A549 (cell line): ENCODE measurements at regions of chr11 and their contacts with region 1.

Region 1: DNA sequence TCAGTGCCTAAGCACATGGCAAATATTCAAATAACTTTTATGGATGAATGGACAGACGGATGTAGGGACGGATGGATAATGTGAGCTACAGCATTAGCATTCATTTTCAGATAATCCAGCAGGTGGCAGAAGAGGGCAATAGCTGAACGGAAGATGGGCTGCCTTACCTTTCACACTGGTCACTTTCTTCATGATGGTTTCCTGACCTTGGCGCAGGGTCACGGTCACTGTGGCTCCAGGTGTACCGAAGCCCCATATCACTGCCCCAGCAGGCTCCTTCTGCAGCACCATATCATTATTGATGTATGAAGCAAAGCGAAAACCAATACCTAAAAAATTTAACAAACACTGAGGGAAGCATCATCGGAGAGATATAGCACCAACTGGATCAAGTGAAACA is 4.3 kb downstream of the SIAE start:
- DNase-seq: peak; percentile 48 to 49
- ATAC-seq: peak; percentile 57 to 65; a peak in 4 of 6 replicates
- H3K4me3 ChIP-seq: no peak overlapping the region
- H3K27ac ChIP-seq: no peak overlapping the region
- H3K4me1 ChIP-seq: no peaks in the 10 kb centered on the region
- CTCF ChIP-seq: peak; percentile 67
- EP300 ChIP-seq: no peak
- POLR2A ChIP-seq: no peak
- RAD21 ChIP-seq: peak; percentile 76 to 81

Region 2: DNA sequence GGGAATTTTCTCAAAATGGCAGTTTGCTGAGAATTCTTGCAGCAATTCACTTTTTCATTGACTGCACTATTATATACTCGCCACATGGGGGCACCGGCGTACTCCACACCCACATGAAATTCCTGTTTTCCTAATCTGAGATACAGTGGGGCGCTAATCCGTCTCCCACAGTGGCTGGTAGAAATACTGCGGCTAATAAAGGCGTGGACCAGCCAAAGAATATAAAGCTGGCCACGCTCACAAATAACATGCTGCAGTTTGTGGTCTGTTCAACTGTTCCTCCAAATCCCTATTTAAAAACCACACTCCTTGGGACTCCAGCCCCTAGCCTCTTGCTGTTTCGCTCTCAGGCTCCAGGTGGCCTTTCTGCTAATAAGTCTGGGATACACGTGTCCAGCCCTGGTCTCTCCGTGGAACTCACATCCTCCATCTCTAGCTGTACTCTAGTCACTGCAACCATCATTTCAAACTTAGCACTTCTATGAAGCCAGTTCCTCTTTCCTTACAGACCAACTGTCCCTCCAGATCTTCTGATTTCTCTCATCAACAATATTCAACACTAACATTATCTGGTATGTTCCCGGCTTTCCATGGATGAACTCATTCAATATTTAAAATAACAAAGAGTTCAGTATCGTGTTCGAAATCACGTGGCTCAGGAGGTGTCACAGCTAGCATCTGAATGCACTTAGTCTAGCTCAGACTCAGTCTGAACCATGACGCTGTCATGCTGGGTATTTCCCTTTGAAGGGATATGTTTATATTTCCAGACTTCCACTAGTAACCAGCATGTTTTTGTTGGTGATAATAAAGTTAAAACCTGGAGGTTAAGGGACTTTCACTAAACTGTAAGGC is 24.5 kb before region 1 on chr11:
- CTCF ChIA-PET with region 1: interaction called, 11 read pairs
- POLR2A ChIA-PET with region 1: no interaction called
- DNase-seq: peak; percentile 51 to 68
- ATAC-seq: peak; percentile 95
- H3K4me3 ChIP-seq: no peak overlapping the region
- H3K27ac ChIP-seq: peak overlapping the region; percentile 31 to 42; a peak in 1 of 6 replicates
- H3K4me1 ChIP-seq: no peaks in the 10 kb centered on the region
- CTCF ChIP-seq: peak; percentile 78
- EP300 ChIP-seq: no peak
- POLR2A ChIP-seq: no peak
- RAD21 ChIP-seq: peak; percentile 60 to 77

Region 3: GRCh38 chr11:124746621-124747243 is 77.5 kb after region 1 on chr11:
- CTCF ChIA-PET with region 1: interaction called, 11 read pairs
- POLR2A ChIA-PET with region 1: no interaction called
- DNase-seq: peak; percentile 84 to 85
- ATAC-seq: peak; percentile 89 to 92
- H3K4me3 ChIP-seq: peak overlapping the region; percentile 66
- H3K27ac ChIP-seq: peak overlapping the region; percentile 79 to 93
- H3K4me1 ChIP-seq: peaks cover 6% of the 10 kb centered on the region; the same call in 2 of the 3 replicates
- CTCF ChIP-seq: peak; percentile 57
- EP300 ChIP-seq: no peak
- POLR2A ChIP-seq: no peak
- RAD21 ChIP-seq: peak in 1 of 2 experiments; percentile 21; a peak in 3 of 5 replicates

Region 4: GRCh38 chr11:124793466-124794278 is 124.5 kb after region 1 on chr11:
- CTCF ChIA-PET with region 1: interaction called, 18 read pairs
- POLR2A ChIA-PET with region 1: interaction called, 3 read pairs
- DNase-seq: peak; percentile 40 to 62
- ATAC-seq: peak; percentile 59 to 88; a peak in 4 of 6 replicates
- H3K4me3 ChIP-seq: no peak overlapping the region
- H3K27ac ChIP-seq: no peak overlapping the region
- H3K4me1 ChIP-seq: peaks cover 31% of the 10 kb centered on the region
- CTCF ChIP-seq: peak; percentile 70
- EP300 ChIP-seq: no peak
- POLR2A ChIP-seq: no peak
- RAD21 ChIP-seq: peak; percentile 65 to 72

Region 5: DNA sequence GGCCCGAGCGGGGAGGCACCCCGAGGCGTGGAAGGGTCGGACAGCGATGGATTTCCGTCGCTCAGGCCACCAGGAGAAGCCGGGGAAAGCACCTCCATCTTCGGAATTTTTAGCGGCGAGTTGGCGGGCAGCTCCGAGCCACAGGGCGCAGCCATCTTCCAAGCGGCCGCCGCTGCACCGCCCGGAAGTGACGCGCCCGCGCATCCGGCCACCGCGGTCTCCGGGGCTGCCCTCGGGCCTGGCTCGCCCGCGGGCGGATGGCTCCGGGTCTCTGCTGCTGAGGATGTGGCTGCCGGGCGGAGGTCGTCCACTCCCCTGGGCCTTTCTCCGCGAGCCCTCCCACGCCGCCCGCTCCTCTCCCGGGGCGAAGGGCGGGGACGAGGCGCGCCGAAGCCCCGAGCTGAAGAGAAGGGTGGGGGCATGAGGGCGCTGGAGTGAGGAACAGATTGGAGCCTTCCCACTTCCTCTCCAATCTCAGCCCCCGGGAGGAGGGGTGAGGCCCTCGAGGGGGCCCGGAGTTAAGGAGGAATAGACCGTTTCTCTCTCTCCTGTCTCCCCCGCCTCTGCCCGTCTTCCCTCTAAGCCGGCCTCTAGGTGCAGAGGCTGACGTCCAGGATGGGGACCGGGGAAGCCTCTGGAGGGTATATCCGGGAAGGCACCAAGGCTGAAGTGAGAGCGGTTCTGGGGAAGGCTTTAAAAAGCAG is 131.2 kb after region 1 on chr11 and contains the start of gene MSANTD2:
- CTCF ChIA-PET with region 1: interaction called, 14 read pairs
- POLR2A ChIA-PET with region 1: no interaction called
- DNase-seq: peak; percentile 68
- ATAC-seq: peak; percentile 96 to 97
- H3K4me3 ChIP-seq: peak within 1 kb of the TSS; percentile 100
- H3K27ac ChIP-seq: peak within 1 kb of the TSS; percentile 99 to 100
- H3K4me1 ChIP-seq: peaks cover 15% of the 10 kb centered on the region; the same call in 2 of the 3 replicates
- CTCF ChIP-seq: no peak
- EP300 ChIP-seq: no peak
- POLR2A ChIP-seq: peak; percentile 78
- RAD21 ChIP-seq: no peak
- polyA plus RNA-seq, gene MSANTD2: 6.4 TPM in 2 replicates

Region 6: GRCh38 chr11:124837491-124837856 is 168.3 kb after region 1 on chr11:
- CTCF ChIA-PET with region 1: interaction called, 12 read pairs
- POLR2A ChIA-PET with region 1: interaction called, 8 read pairs
- DNase-seq: peak; percentile 30 to 86
- ATAC-seq: peak; percentile 80 to 82; a peak in 5 of 6 replicates
- H3K4me3 ChIP-seq: no peak overlapping the region
- H3K27ac ChIP-seq: no peak overlapping the region
- H3K4me1 ChIP-seq: peaks cover 8% of the 10 kb centered on the region; the same call in 1 of the 3 replicates
- CTCF ChIP-seq: no peak; the same call in 2 of the 3 replicates
- EP300 ChIP-seq: no peak
- POLR2A ChIP-seq: no peak
- RAD21 ChIP-seq: peak; percentile 39 to 64; a peak in 4 of 5 replicates

Region 7: DNA sequence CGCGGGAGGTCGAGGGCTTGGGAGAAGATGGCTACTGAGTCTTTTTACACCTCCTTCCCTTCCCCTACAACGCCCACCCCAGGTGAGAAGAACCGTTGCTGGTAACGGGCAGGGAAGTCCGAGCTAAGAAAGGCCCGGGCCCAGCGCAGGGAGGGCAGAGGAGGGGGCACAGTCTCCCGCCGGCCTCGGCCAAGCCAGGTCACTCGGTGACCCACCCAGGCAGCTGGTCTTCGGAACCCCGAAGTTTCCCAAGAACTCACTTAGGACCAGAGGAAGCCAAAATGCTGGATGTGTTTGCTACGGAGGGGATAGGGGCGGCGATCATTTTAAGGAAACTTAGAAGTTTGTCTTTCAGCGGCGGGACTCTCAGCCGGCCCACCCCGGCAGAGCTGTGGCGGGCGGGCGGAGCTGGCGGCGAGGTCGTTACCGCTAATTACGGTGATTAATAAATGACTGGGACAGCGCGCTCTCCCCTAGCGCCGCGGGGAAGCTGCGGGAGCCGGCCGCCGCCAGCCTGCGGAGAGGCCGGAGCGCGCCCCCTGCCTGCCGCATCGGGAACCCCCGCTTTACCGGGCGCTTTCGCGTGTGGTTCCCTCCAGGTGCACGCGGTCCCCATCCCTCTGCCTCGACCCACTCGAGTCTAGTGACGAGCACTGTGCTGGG is 196.9 kb after region 1 on chr11:
- CTCF ChIA-PET with region 1: interaction called, 30 read pairs
- POLR2A ChIA-PET with region 1: no interaction called
- DNase-seq: peak in 1 of 2 experiments; percentile 64
- ATAC-seq: peak; percentile 30 to 75; a peak in 3 of 6 replicates
- H3K4me3 ChIP-seq: peak overlapping the region; percentile 40
- H3K27ac ChIP-seq: no peak overlapping the region
- H3K4me1 ChIP-seq: peaks cover 14% of the 10 kb centered on the region; the same call in 2 of the 3 replicates
- CTCF ChIP-seq: peak; percentile 61
- EP300 ChIP-seq: no peak
- POLR2A ChIP-seq: no peak
- RAD21 ChIP-seq: peak; percentile 22 to 27; a peak in 1 of 5 replicates